ENCODE measurements at regions of chr7 and their contacts with region 1.

Region 1: GRCh38 chr7:104231054-104232046 is 23.5 kb upstream of the ORC5 start:
- DNase-seq: peak; percentile 56
- H3K4me3 Mint-ChIP-seq: no peak overlapping the region
- H3K27ac Mint-ChIP-seq: no peak overlapping the region
- H3K4me1 Mint-ChIP-seq: no peaks in the 10 kb centered on the region
- H3K27me3 Mint-ChIP-seq: peaks cover 14% of the 10 kb centered on the region

Region 2: GRCh38 chr7:104048055-104048454 is 183.3 kb before region 1 on chr7:
- CTCF ChIA-PET with region 1: no interaction called
- intact Hi-C with region 1: no loop called
- DNase-seq: no peak
- H3K4me3 Mint-ChIP-seq: no peak overlapping the region
- H3K27ac Mint-ChIP-seq: no peak overlapping the region
- H3K4me1 Mint-ChIP-seq: no peaks in the 10 kb centered on the region
- H3K27me3 Mint-ChIP-seq: peaks cover 12% of the 10 kb centered on the region

Region 3: GRCh38 chr7:104267701-104268368 is 36.5 kb after region 1 on chr7:
- CTCF ChIA-PET with region 1: interaction called, 27 read pairs
- intact Hi-C with region 1: loop called (anchors 1 kb)
- DNase-seq: no peak
- H3K4me3 Mint-ChIP-seq: no peak overlapping the region
- H3K27ac Mint-ChIP-seq: no peak overlapping the region
- H3K4me1 Mint-ChIP-seq: no peaks in the 10 kb centered on the region
- H3K27me3 Mint-ChIP-seq: peaks cover 14% of the 10 kb centered on the region

Region 4: DNA sequence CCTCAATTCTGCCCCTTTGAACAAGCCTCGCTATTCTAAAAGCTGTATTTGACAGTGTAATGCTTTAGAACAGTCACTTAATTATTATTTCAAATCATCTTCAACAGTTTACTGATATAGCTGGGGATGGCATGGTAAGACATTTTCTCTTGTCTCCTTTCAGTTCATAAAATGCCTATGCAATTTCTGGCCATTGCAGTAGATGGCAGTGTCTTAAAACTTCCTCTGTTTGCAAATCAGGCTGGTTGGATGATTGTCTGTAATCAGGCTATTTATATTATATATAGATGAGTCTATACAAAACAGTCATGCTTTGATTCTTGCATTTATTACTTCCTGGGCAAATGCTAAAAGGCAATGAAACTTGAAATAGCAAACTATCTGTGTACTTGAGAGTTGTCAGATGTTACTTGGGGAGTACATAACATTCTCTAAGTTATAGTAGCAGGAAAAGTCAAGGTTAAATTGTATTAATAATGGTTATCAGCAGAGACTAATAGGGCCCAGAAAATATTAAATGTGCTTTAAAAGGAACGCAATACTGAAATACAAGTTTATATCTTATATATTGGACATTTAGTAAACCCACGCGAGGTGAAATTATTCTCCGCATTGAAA is 41.5 kb after region 1 on chr7:
- CTCF ChIA-PET with region 1: interaction called, 27 read pairs
- intact Hi-C with region 1: loop called (anchors 1 kb)
- DNase-seq: peak; percentile 18
- H3K4me3 Mint-ChIP-seq: no peak overlapping the region
- H3K27ac Mint-ChIP-seq: no peak overlapping the region
- H3K4me1 Mint-ChIP-seq: no peaks in the 10 kb centered on the region
- H3K27me3 Mint-ChIP-seq: peaks cover 28% of the 10 kb centered on the region

Region 5: GRCh38 chr7:104627516-104627915 is 396.2 kb after region 1 on chr7:
- CTCF ChIA-PET with region 1: no interaction called
- intact Hi-C with region 1: loop called (anchors 10 kb)
- DNase-seq: peak; percentile 50
- H3K4me3 Mint-ChIP-seq: no peak overlapping the region
- H3K27ac Mint-ChIP-seq: no peak overlapping the region
- H3K4me1 Mint-ChIP-seq: no peaks in the 10 kb centered on the region
- H3K27me3 Mint-ChIP-seq: peaks cover 8% of the 10 kb centered on the region